Right ventricle myocardium superior (tissue), 1 donor: ENCODE measurements at regions of chr4 and their contacts with region 1.

Region 1: DNA sequence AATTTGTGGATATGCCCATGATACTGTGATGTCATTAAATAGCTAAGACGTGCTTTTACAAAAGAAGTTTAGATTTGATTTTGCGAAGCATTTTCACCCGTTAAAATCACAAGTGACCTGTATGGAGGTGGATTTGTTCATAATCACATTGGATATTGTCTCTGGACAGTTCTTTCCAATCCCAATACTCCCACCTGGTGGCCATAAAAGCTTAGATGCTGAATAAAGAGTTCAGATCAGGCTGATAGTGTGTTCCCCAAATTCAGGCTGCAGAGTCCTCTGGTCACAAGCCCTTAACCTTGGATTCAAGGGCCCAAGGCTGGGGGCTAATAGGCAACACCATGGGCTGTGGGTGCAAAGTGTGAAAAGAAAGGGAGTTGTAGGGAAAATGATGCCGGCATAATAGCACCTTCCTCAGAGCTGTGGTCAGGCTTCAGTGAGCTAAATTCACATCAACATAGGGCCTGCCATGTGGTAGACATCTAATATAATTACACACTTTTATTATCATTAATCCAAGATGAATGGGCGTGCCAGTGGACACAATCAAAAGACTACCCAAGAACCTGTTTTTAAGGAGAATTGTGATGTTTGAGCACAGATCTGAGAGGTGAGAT is 28.1 kb downstream of the SMIM43 start:
- DNase-seq: no peak
- ATAC-seq: no peak

Region 2: DNA sequence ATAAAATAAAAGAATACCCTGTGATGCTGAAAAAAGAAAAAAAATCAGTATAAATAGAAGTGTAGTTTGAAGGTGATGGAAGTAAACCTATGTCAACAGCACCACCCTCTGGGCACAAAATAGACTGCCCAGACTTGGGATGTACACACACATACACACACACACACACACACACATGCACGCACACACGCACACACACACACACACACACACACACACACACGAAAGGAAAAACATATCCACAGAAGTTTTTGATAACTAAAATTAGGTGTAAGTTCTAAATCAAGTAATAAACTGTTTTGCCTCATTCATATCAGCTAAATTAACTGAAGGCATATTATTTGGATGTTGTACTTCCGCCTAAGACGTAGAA is 80.6 kb before region 1 on chr4:
- intact Hi-C with region 1: no loop called
- DNase-seq: peak; percentile 47
- ATAC-seq: peak; percentile 82

Region 3: DNA sequence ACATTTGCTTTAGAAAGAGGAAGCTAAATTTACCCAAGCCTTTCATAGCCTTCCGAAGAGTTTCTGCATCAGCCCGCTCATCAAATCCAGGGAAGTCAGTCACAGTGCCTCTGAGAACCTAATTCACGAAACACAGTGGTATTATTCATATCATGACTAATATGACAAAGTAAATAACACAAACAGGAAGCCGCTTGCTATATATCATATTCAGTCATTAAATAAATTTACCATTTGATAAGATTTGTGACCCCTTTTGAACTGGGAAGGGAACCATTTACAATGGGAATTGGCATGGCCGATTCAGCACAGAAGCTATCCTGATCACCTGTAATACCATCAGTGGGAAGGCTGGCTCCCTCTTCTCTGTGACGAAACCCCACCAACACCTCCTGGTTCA is 50.6 kb before region 1 on chr4:
- intact Hi-C with region 1: loop called (anchors 10 kb)
- DNase-seq: no peak
- ATAC-seq: no peak

Region 4: DNA sequence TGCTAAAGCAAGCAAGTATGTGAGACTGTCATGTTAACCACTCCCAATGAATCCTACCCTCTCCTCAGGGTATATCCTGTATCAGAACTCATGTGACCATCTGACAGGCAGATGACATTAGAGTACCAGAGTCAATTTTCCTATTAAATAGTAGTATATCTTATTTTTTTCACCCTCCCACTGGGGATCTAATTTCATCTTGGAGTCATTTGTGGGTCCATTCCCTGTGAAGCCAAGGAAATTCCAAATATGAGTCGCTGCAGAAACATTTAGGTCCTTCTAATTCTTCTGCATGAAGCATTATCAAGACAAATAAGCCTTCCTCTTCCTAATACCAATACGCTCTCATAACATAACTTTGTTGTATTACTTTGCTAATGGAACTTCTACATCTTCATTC is 363.1 kb after region 1 on chr4:
- intact Hi-C with region 1: no loop called
- DNase-seq: no peak
- ATAC-seq: no peak